ENCODE measurements at regions of chr14 and their contacts with region 1.

Region 1: DNA sequence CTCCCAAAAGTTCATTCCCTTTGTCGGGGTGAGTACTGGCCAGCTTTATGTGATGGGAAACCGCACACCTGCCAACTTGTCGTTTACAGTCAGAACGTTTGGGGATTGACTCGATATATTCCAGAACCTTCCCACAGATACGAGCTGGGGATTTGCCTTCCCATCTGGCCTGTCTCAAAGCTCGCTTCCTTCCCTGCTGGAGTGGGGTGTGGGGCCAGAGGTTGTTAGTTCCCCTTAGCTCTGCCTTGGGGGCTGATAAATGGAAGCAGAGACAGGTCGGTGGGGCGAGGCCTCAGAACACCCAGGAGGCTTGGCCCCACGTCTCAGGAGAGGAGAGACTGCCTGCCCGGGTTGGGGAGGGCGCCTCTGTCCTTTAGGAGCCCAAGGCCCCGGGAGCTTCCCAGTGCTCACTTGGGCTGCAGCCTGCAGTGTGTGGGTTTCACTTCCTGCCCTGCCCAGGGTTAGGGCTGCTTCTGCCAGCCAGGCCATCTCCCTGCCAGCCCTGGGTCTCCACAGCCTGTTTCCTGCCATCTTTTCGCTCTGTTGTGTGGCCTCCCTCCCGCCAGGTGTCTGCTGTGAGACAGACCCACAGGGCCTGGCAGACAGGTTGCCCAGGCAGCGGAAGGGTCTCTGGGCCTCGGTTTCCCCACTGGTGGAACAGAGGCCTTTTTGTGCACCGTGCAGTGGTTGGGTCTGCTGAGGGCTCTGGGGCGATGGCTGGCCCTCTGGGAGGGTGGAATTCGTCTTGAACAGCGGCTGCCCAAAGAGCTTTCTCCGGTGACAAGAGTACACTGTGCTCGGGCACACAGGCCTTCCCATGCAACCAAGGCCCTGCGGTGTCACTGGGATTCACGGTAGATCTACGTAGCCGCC is 8.1 kb upstream of the TEX22 start:
- DNase-seq: no peak
- ATAC-seq: no peak
- H3K4me3 ChIP-seq: no peak overlapping the region
- H3K27ac ChIP-seq: no peak overlapping the region
- H3K4me1 ChIP-seq: no peaks in the 10 kb centered on the region
- CTCF ChIP-seq: no peak
- EP300 ChIP-seq: no peak
- POLR2A ChIP-seq: no peak
- RAD21 ChIP-seq: no peak

Region 2: GRCh38 chr14:105368965-105369652 is 21.1 kb before region 1 on chr14:
- CTCF ChIA-PET with region 1: interaction called, 49 read pairs
- POLR2A ChIA-PET with region 1: no interaction called
- DNase-seq: no peak
- ATAC-seq: no peak
- H3K4me3 ChIP-seq: no peak overlapping the region
- H3K27ac ChIP-seq: no peak overlapping the region
- H3K4me1 ChIP-seq: no peaks in the 10 kb centered on the region
- CTCF ChIP-seq: no peak
- EP300 ChIP-seq: no peak
- POLR2A ChIP-seq: no peak
- RAD21 ChIP-seq: no peak